Posterior cingulate gyrus (tissue), 11 donors: ENCODE measurements at regions of chr3 and their contacts with region 1.

Region 1: GRCh38 chr3:184371570-184372018 is 6.4 kb downstream of the THPO start:
- DNase-seq: peak; percentile 56 to 97 (median 79)

Region 2: DNA sequence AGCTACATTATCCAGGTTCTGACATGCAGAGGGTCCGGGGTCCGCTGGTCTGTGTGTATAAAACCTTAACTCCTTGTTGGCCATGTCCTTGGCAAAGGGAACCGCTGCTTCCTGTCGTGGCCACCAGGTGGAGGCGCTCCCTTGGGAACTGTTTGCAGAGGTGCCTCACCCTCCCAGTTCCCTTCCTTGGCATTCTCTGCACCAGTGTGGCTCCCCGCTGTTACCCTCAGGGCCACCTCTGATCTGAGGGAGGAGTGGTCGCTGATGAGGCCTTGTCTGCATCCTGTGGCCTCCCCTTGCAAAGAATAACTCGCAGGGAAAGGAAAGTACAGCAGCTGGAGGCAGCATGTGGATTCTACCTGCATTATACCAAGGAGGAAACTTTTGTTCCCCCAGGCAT is 97.8 kb after region 1 on chr3:
- intact Hi-C with region 1: loop called (anchors 10 kb)
- DNase-seq: peak in 9 of 10 donors; percentile 27 to 90 (median 47)

Region 3: GRCh38 chr3:184513276-184514170 is 141.9 kb after region 1 on chr3:
- intact Hi-C with region 1: loop called (anchors 10 kb)
- DNase-seq: peak; percentile 61 to 96 (median 84)

Region 4: GRCh38 chr3:184543843-184544512 is 172.4 kb after region 1 on chr3:
- intact Hi-C with region 1: loop called (anchors 1 kb)
- DNase-seq: peak; percentile 53 to 95 (median 75)